BJ (cell line): ENCODE measurements at regions of chr3 and their contacts with region 1.

Region 1: DNA sequence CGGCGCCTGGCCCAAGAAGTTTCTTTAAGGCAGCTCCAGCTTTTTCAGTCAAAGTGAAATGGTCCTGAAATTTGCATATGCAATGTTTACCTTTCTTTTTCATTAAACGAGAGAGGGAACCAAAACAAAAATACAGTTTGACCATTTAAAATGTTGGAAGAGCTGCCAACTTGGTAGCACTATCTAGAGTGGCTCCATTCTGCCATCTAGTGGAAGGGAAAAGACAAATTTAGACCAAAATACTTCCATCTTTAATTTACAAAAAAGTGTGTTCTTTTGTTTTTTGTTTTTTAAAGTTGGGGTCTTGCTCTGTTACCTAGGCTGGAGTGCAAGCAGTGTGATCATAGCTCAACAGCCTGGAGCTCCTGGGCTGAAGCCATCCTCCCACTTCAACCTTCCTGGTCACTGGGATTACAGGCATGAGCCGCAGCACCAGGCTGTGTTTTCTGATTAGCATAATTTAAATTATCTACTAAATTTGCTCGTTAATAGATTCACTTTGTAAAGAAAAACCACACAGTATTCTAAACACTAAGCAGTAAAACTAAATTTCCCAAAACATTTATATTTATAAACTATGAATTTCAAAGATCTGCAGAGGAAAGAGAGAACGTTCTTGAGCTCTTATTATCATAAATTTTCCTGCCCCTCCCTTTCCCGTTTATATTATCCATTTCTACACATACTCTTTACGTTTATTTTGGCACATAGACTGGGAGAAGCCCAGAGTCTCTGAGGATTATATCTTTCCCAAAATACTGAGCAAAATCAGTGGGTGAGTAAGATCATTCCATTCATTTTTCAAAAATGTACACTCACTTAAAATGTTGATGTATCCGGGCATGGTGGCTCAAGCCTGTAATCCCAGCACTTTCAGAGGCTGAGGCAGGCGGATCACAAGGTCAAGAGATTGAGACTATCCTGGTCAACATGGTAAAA is 15.4 kb upstream of the RFC4 start:
- DNase-seq: no peak
- H3K4me3 ChIP-seq: no peak overlapping the region
- H3K27me3 ChIP-seq: no peaks in the 10 kb centered on the region
- CTCF ChIP-seq: peak; percentile 67

Region 2: GRCh38 chr3:186683979-186684378 is 137.7 kb before region 1 on chr3:
- CTCF ChIA-PET with region 1: no interaction called
- POLR2A ChIA-PET with region 1: no interaction called
- DNase-seq: no peak
- H3K4me3 ChIP-seq: no peak overlapping the region
- H3K27me3 ChIP-seq: no peaks in the 10 kb centered on the region; the same call in 1 of the 2 replicates
- CTCF ChIP-seq: no peak

Region 3: GRCh38 chr3:186807231-186807630 is 14.5 kb before region 1 on chr3:
- CTCF ChIA-PET with region 1: interaction called, 11 read pairs
- POLR2A ChIA-PET with region 1: no interaction called
- DNase-seq: no peak
- H3K4me3 ChIP-seq: peak overlapping the region; percentile 87; the same call in 1 of the 2 replicates
- H3K27me3 ChIP-seq: no peaks in the 10 kb centered on the region
- CTCF ChIP-seq: no peak